ENCODE measurements at regions of chr12 and their contacts with region 1.

Region 1: GRCh38 chr12:132761032-132761920 is at the start of gene ANKLE2:
- DNase-seq: peak; percentile 84
- H3K4me3 Mint-ChIP-seq: peak within 1 kb of the TSS; percentile 98
- H3K27ac Mint-ChIP-seq: peak within 1 kb of the TSS; percentile 99
- H3K4me1 Mint-ChIP-seq: peaks cover 38% of the 10 kb centered on the region
- H3K27me3 Mint-ChIP-seq: no peaks in the 10 kb centered on the region
- total RNA-seq, gene ANKLE2: 102 to 106 TPM

Region 2: GRCh38 chr12:132489602-132490239 is 271.6 kb before region 1 on chr12 and contains the start of gene FBRSL1:
- CTCF ChIA-PET with region 1: no interaction called
- intact Hi-C with region 1: loop called (anchors 5 kb)
- DNase-seq: peak; percentile 93
- H3K4me3 Mint-ChIP-seq: peak within 1 kb of the TSS; percentile 79
- H3K27ac Mint-ChIP-seq: peak within 1 kb of the TSS; percentile 73
- H3K4me1 Mint-ChIP-seq: peaks cover 57% of the 10 kb centered on the region
- H3K27me3 Mint-ChIP-seq: no peaks in the 10 kb centered on the region
- total RNA-seq, gene FBRSL1: 35.1 to 36.3 TPM

Region 3: GRCh38 chr12:132710422-132711168 is 50.7 kb before region 1 on chr12 and contains the start of gene PGAM5:
- CTCF ChIA-PET with region 1: interaction called, 4 read pairs
- intact Hi-C with region 1: loop called (anchors 1 kb)
- DNase-seq: peak; percentile 86
- H3K4me3 Mint-ChIP-seq: peak within 1 kb of the TSS; percentile 85
- H3K27ac Mint-ChIP-seq: peak within 1 kb of the TSS; percentile 66
- H3K4me1 Mint-ChIP-seq: peaks cover 27% of the 10 kb centered on the region
- H3K27me3 Mint-ChIP-seq: no peaks in the 10 kb centered on the region
- total RNA-seq, gene PGAM5: 50.1 to 55.7 TPM

Region 4: GRCh38 chr12:132828706-132829534 is 67.6 kb after region 1 on chr12 and contains the start of gene GOLGA3:
- CTCF ChIA-PET with region 1: no interaction called
- intact Hi-C with region 1: loop called (anchors 2 kb)
- DNase-seq: peak; percentile 95
- H3K4me3 Mint-ChIP-seq: peak within 1 kb of the TSS; percentile 98
- H3K27ac Mint-ChIP-seq: peak within 1 kb of the TSS; percentile 100
- H3K4me1 Mint-ChIP-seq: peaks cover 49% of the 10 kb centered on the region
- H3K27me3 Mint-ChIP-seq: no peaks in the 10 kb centered on the region
- total RNA-seq, gene GOLGA3: 25.2 to 29.1 TPM

Region 5: DNA sequence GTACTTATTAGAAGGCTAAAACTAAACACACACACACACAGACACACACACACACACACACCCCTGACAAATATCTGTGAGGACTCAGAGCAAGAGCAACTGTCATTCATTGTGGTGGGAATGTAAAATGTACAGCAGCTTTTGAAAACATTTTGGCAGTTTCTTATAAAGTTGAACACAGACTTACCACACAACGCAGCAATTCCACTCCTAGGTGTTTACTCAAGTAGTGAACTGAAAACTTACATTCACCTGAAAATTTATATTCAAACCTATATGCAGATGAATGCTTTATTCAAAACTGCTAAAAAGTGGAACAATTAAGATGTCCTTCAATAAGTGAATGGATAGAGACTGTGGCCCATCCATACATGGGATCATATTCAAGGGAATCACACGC is 176.2 kb after region 1 on chr12:
- CTCF ChIA-PET with region 1: no interaction called
- intact Hi-C with region 1: no loop called
- DNase-seq: no peak
- H3K4me3 Mint-ChIP-seq: no peak overlapping the region
- H3K27ac Mint-ChIP-seq: no peak overlapping the region
- H3K4me1 Mint-ChIP-seq: no peaks in the 10 kb centered on the region
- H3K27me3 Mint-ChIP-seq: no peaks in the 10 kb centered on the region

Region 6: GRCh38 chr12:132956011-132956788 is 194.9 kb after region 1 on chr12 and contains the start of gene ZNF605:
- CTCF ChIA-PET with region 1: no interaction called
- intact Hi-C with region 1: loop called (anchors 5 kb)
- DNase-seq: peak; percentile 92
- H3K4me3 Mint-ChIP-seq: peak within 1 kb of the TSS; percentile 89
- H3K27ac Mint-ChIP-seq: peak within 1 kb of the TSS; percentile 87
- H3K4me1 Mint-ChIP-seq: peaks cover 20% of the 10 kb centered on the region
- H3K27me3 Mint-ChIP-seq: no peaks in the 10 kb centered on the region
- total RNA-seq, gene ZNF605: 4.3 to 5.3 TPM

Region 7: DNA sequence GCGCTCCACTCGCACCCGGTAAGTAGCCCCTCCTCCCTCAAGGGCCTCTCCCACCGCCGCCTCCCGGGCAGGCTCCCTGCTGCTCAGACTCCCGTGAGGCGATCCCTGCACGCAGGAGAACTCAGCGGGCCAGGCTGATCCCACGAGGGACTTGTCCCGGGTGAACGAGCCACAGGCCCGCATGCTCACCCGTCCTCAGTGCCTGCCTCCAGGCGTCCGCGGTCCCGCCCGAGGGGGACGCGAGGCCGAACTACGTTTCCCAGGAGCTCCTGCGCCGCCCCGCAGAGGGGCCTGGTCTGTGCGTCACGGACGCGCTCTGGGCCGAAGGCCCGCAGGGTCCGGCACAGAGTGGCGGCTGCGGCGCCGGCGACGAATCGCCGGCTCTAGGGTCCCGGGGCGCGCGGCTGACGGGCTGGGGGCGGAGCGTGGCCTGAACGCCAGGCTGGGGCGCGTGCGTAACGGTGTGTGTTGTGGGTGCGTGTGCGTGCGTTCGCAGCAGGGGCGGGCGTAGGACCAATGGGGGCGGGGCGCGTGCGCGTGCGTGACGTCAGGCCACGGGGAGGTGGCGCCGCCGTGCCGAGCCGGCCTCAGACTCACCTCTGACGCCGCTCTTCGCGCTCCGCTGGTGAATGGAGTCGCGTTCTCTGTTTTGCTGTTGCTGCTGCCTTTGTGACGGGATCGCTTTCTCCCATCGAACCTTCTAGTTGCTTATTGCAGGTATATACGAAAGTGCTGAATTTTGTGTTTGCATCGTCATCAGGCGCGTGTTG is 368.9 kb after region 1 on chr12 and contains the starts of genes ZNF10 and ZNF891:
- CTCF ChIA-PET with region 1: no interaction called
- intact Hi-C with region 1: loop called (anchors 1 kb)
- DNase-seq: peak; percentile 97
- H3K4me3 Mint-ChIP-seq: peak within 1 kb of the TSS; percentile 97
- H3K27ac Mint-ChIP-seq: peak within 1 kb of the TSS; percentile 97
- H3K4me1 Mint-ChIP-seq: peaks cover 14% of the 10 kb centered on the region
- H3K27me3 Mint-ChIP-seq: no peaks in the 10 kb centered on the region
- total RNA-seq, gene ZNF10: 4.9 to 6.0 TPM
- total RNA-seq, gene ZNF891: 1.1 to 1.2 TPM